Activated CD4-positive, alpha-beta T cell treated with anti-CD3 and anti-CD28 coated beads, Interleukin-2, amount 10 ng/mL, durations not matched to agents 24 days and 14 days (primary cell): ENCODE measurements at regions of chr22 and their contacts with region 1.

Region 1: GRCh38 chr22:50341977-50342650 is 1.0 kb upstream of the PPP6R2 start:
- DNase-seq: peak; percentile 97
- H3K4me3 Mint-ChIP-seq: peak overlapping the region; percentile 80
- H3K27ac Mint-ChIP-seq: peak overlapping the region; percentile 89
- H3K4me1 Mint-ChIP-seq: peaks cover 4% of the 10 kb centered on the region
- H3K27me3 Mint-ChIP-seq: no peaks in the 10 kb centered on the region

Region 2: GRCh38 chr22:50244420-50245213 is 97.5 kb before region 1 on chr22 and contains the start of gene TUBGCP6:
- intact Hi-C with region 1: loop called (anchors 1 kb)
- DNase-seq: peak; percentile 98
- H3K4me3 Mint-ChIP-seq: peak within 1 kb of the TSS; percentile 97
- H3K27ac Mint-ChIP-seq: peak within 1 kb of the TSS; percentile 100
- H3K4me1 Mint-ChIP-seq: peaks cover 22% of the 10 kb centered on the region
- H3K27me3 Mint-ChIP-seq: peaks cover 2% of the 10 kb centered on the region
- total RNA-seq, gene TUBGCP6: 51.1 and 51.7 TPM in 2 replicates

Region 3: DNA sequence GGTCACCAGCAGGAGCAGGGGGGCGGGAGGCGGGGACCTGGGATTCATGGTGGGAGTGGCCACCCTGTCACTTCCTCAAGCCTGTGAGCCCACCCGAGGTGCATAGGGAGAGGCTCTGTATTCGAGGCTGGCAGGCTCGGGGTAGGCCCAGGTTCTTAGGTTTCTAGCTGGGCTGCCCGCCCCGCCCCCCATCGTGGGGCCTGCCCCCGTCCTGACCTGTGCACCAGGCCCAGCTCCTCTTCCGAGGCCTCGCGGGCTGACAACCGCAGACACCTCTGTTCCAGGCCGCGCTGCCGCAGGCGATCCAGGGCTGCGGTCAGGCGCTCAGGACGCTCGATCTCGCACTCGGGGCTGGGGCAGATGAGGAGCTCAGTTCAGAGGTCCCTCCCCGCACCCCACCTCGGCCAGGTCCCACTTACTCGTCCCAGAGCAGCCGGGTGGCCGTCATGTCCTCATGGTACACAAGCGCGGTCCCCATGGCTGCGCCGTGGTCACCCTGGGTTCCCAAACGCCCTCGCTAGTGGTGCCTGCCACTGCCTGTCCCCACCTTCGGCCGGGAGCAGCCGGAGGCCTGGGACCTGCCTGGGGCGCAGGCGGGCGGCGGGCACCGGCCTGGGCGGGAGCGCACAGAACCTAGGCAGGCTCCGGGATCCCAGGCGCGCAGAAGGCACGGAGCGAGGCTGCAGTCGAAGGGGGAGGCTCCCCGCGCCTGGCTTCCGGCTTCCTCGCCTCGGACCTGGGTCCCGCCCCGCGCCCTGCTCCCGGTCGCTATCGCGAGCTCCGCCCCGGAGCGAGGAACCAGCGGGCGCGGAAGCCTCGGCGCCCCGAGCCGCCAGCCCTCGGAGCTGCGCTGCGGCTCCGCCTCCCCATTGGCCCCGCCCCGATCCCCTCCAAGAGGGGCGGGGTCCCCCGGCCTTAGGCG is 91.3 kb before region 1 on chr22 and contains the start of gene HDAC10:
- intact Hi-C with region 1: loop called (anchors 1 kb)
- DNase-seq: peak; percentile 96
- H3K4me3 Mint-ChIP-seq: peak within 1 kb of the TSS; percentile 84
- H3K27ac Mint-ChIP-seq: peak within 1 kb of the TSS; percentile 80
- H3K4me1 Mint-ChIP-seq: peaks cover 3% of the 10 kb centered on the region
- H3K27me3 Mint-ChIP-seq: no peaks in the 10 kb centered on the region
- total RNA-seq, gene HDAC10: 62.2 and 64.6 TPM in 2 replicates

Region 4: GRCh38 chr22:50271519-50271970 is 70.6 kb before region 1 on chr22:
- intact Hi-C with region 1: loop called (anchors 2 kb)
- DNase-seq: peak; percentile 90
- H3K4me3 Mint-ChIP-seq: no peak overlapping the region
- H3K27ac Mint-ChIP-seq: no peak overlapping the region
- H3K4me1 Mint-ChIP-seq: peaks cover 13% of the 10 kb centered on the region
- H3K27me3 Mint-ChIP-seq: peaks cover 6% of the 10 kb centered on the region

Region 5: GRCh38 chr22:50326959-50327710 is 15.0 kb before region 1 on chr22 and contains the start of gene DENND6B:
- intact Hi-C with region 1: loop called (anchors 1 kb)
- DNase-seq: peak; percentile 93
- H3K4me3 Mint-ChIP-seq: peak within 1 kb of the TSS; percentile 87
- H3K27ac Mint-ChIP-seq: peak within 1 kb of the TSS; percentile 87
- H3K4me1 Mint-ChIP-seq: peaks cover 13% of the 10 kb centered on the region
- H3K27me3 Mint-ChIP-seq: peaks cover 18% of the 10 kb centered on the region
- total RNA-seq, gene DENND6B: 1.4 and 2.2 TPM in 2 replicates

Region 6: DNA sequence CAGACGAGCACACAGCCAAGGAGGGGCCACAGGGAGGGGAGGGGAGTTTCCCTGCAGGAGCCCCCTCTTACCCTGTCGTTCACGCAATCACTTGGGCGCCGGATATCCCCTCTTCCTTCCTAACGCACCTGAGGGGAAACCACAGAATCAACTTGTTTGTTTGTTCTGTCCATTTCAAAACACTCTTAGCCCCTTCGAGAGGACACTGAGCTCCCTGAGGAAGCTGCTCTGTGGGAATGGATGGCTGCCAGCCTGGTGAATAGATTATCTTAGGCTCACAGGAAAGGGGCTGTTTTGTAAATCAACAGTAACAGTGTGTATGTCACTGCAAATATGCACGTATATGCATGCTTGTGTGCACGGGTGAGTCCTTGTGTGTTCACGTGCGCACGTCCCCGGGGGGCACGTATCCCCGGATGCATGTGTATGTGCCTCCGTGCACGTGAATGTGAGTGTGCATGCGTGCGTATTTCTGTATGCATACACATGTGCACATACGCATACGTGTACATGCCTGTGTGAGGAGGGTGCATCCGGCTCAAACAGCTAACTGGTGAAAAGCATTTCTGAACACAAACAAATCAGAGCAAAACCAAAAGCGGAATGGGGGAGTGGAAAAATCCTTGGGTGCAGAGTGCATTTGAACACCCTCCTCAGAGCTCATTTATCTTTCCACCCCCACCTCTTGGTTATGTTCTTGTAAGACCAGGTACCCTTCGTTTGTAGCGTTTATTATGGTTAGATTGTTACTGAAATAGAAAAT is 278.7 kb after region 1 on chr22:
- intact Hi-C with region 1: loop called (anchors 2 kb)
- DNase-seq: peak; percentile 92
- H3K4me3 Mint-ChIP-seq: peak overlapping the region; percentile 85
- H3K27ac Mint-ChIP-seq: peak overlapping the region; percentile 99
- H3K4me1 Mint-ChIP-seq: peaks cover 35% of the 10 kb centered on the region
- H3K27me3 Mint-ChIP-seq: no peaks in the 10 kb centered on the region